ENCODE measurements at regions of chr10 and their contacts with region 1.

Region 1: GRCh38 chr10:61284222-61284890 is 168.8 kb downstream of the TMEM26 start:
- DNase-seq: peak in 1 of 2 experiments; percentile 74
- H3K4me3 ChIP-seq: 0 out of 2 replicates have a peak overlapping the region, but pooled peaks have one; percentile 14
- H3K27ac ChIP-seq: 0 out of 2 replicates have a peak overlapping the region, but pooled peaks have one; percentile 9
- H3K4me1 ChIP-seq: peaks cover 6% of the 10 kb centered on the region; the same call in 1 of the 2 replicates
- H3K27me3 ChIP-seq: no peaks in the 10 kb centered on the region
- CTCF ChIP-seq: peak; percentile 91

Region 2: GRCh38 chr10:61140765-61141392 is 143.5 kb before region 1 on chr10:
- CTCF ChIA-PET with region 1: no interaction called
- POLR2A ChIA-PET with region 1: no interaction called
- intact Hi-C with region 1: loop called (anchors 2 kb)
- DNase-seq: peak in 1 of 2 experiments; percentile 42
- H3K4me3 ChIP-seq: no peak overlapping the region
- H3K27ac ChIP-seq: no peak overlapping the region
- H3K4me1 ChIP-seq: no peaks in the 10 kb centered on the region
- H3K27me3 ChIP-seq: no peaks in the 10 kb centered on the region
- CTCF ChIP-seq: peak; percentile 76

Region 3: DNA sequence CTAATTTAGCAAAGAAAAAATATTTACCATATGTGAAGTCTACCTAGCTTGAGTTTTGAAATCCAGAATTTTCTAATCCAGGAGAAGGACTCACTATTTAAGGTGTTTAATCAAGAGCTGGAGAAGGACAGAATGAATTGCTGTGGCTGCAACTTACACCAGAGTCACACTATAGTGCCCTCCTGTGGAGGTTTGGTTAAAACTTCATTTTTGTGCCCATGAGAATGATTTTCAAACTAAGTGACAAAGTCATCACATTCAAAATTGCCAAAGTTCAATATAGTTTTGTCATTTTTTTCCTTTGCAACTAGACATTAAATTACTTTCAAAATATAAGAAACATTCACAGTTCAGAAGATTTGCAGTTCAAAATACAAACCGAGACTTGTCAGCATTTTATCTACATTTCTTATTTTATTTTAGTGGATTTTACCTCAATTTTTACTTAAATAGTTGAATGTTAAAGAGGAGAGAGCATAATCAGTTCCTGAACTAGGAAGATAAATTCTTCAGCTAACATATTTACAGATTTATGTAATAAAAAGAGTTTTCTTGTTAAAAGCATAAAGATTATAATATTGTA is 449.1 kb after region 1 on chr10:
- CTCF ChIA-PET with region 1: no interaction called
- POLR2A ChIA-PET with region 1: no interaction called
- intact Hi-C with region 1: loop called (anchors 10 kb)
- DNase-seq: peak in 1 of 2 experiments; percentile 9
- H3K4me3 ChIP-seq: no peak overlapping the region
- H3K27ac ChIP-seq: no peak overlapping the region
- H3K4me1 ChIP-seq: no peaks in the 10 kb centered on the region
- H3K27me3 ChIP-seq: no peaks in the 10 kb centered on the region
- CTCF ChIP-seq: peak; percentile 79

Measured in PC-9 (cell line).